K562 (cell line): ENCODE measurements at regions of chr2 and their contacts with region 1.

Region 1: GRCh38 chr2:200963124-200963917 is at the start of gene ORC2:
- DNase-seq: peak; percentile 94 to 96 (median 94)
- ATAC-seq: peak; percentile 93
- H3K4me3 ChIP-seq: peak within 1 kb of the TSS; percentile 63
- H3K27ac ChIP-seq: peak within 1 kb of the TSS; percentile 94
- H3K4me1 ChIP-seq: peaks cover 8 to 10% of the 10 kb centered on the region in 2 experiments; a peak in 4 of 5 replicates
- H3K27me3 ChIP-seq: no peaks in the 10 kb centered on the region
- CTCF ChIP-seq: peak; percentile 73 to 97 (median 77)
- EP300 ChIP-seq: no peak
- POLR2A ChIP-seq: peak; percentile 81
- RAD21 ChIP-seq: peak; percentile 46 to 59
- polyA plus RNA-seq, gene ORC2: 5.6 to 9.7 TPM

Region 2: GRCh38 chr2:200681697-200682096 is 281.6 kb before region 1 on chr2:
- CTCF ChIA-PET with region 1: no interaction called
- POLR2A ChIA-PET with region 1: no interaction called
- in situ Hi-C with region 1: no loop called
- intact Hi-C with region 1: no loop called
- DNase-seq: no peak
- ATAC-seq: no peak
- H3K4me3 ChIP-seq: no peak overlapping the region
- H3K27ac ChIP-seq: no peak overlapping the region
- H3K4me1 ChIP-seq: no peaks in the 10 kb centered on the region
- H3K27me3 ChIP-seq: peaks cover 4 to 11% of the 10 kb centered on the region in 2 experiments; a peak in 2 of 5 replicates
- CTCF ChIP-seq: no peak
- EP300 ChIP-seq: no peak
- POLR2A ChIP-seq: no peak
- RAD21 ChIP-seq: no peak

Region 3: GRCh38 chr2:200975672-200976071 is 12.4 kb after region 1 on chr2:
- CTCF ChIA-PET with region 1: no interaction called
- POLR2A ChIA-PET with region 1: interaction called, 24 read pairs
- in situ Hi-C with region 1: no loop called
- intact Hi-C with region 1: no loop called
- DNase-seq: no peak
- ATAC-seq: no peak
- H3K4me3 ChIP-seq: no peak overlapping the region
- H3K27ac ChIP-seq: no peak overlapping the region
- H3K4me1 ChIP-seq: no peaks in the 10 kb centered on the region
- H3K27me3 ChIP-seq: no peaks in the 10 kb centered on the region
- CTCF ChIP-seq: no peak
- EP300 ChIP-seq: no peak
- POLR2A ChIP-seq: no peak
- RAD21 ChIP-seq: no peak

Region 4: DNA sequence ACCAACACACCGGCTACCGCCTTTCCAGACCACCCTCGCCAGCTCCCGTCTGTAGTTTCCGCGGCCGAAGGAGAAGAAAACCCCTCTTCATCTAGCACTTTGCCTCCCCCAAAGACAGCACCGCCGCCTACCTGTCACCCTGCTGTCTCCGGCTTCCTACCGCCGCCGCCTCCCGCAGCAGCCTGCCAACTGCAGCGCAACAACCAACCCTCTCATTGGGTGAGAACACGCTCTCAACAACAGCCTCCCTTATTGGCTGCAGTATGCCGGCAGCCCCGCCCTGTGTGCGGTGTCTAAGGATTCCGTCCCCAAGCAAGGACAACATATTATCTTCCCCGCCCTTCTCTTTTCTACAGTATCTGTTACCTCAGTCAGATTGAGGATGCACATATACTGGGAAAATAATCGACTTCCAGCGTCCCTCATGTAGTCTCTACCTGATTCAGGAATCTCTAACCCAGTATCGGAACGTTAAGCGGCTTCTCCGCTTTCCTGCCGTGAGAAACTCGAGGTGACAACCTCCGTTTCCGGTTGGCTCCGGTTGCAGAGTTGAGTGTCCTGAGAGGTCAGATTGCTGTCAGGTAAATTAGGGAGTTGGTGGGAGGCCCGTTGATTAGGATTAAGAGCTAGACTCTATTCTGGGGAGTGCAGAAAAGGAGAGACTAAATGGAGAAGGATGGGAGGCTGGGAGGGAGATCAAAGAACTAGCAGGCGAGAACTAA is 108.3 kb after region 1 on chr2 and contains the starts of genes HYCC2 and NDUFB3:
- CTCF ChIA-PET with region 1: interaction called, 9 read pairs
- POLR2A ChIA-PET with region 1: no interaction called
- in situ Hi-C with region 1: no loop called
- intact Hi-C with region 1: loop called (anchors 2 kb)
- DNase-seq: peak; percentile 94 to 98 (median 96)
- ATAC-seq: peak; percentile 92
- H3K4me3 ChIP-seq: peak within 1 kb of the TSS; percentile 83
- H3K27ac ChIP-seq: peak within 1 kb of the TSS; percentile 99
- H3K4me1 ChIP-seq: peaks cover 4 to 5% of the 10 kb centered on the region in 2 experiments; a peak in 3 of 5 replicates
- H3K27me3 ChIP-seq: no peaks in the 10 kb centered on the region
- CTCF ChIP-seq: peak; percentile 38 to 47 (median 42); a peak in 4 of 6 replicates
- EP300 ChIP-seq: 0 out of 2 replicates have a peak, but pooled peaks have one; percentile 17
- POLR2A ChIP-seq: peak; percentile 84
- RAD21 ChIP-seq: 0 out of 4 replicates have a peak, but pooled peaks of 1 of the 2 experiments have one; percentile 2
- polyA plus RNA-seq, gene HYCC2: 7.5 to 9.8 TPM
- polyA plus RNA-seq, gene NDUFB3: 679 to 786 TPM

Region 5: GRCh38 chr2:201158111-201158929 is 195.0 kb after region 1 on chr2:
- CTCF ChIA-PET with region 1: no interaction called
- POLR2A ChIA-PET with region 1: interaction called, 6 read pairs
- in situ Hi-C with region 1: no loop called
- intact Hi-C with region 1: loop called (anchors 5 kb)
- DNase-seq: peak; percentile 42 to 82 (median 60)
- ATAC-seq: peak; percentile 94
- H3K4me3 ChIP-seq: no peak overlapping the region
- H3K27ac ChIP-seq: peak overlapping the region; percentile 66
- H3K4me1 ChIP-seq: peaks cover 7 to 17% of the 10 kb centered on the region in 2 experiments; a peak in 4 of 5 replicates
- H3K27me3 ChIP-seq: no peaks in the 10 kb centered on the region
- CTCF ChIP-seq: peak; percentile 61 to 84 (median 75)
- EP300 ChIP-seq: peak; percentile 74
- POLR2A ChIP-seq: no peak
- RAD21 ChIP-seq: peak; percentile 86 to 90

Region 6: GRCh38 chr2:201176081-201176481 is 212.8 kb after region 1 on chr2:
- CTCF ChIA-PET with region 1: no interaction called
- POLR2A ChIA-PET with region 1: no interaction called
- in situ Hi-C with region 1: no loop called
- intact Hi-C with region 1: loop called (anchors 5 kb)
- DNase-seq: no peak
- ATAC-seq: no peak
- H3K4me3 ChIP-seq: no peak overlapping the region
- H3K27ac ChIP-seq: no peak overlapping the region
- H3K4me1 ChIP-seq: peaks cover 0 to 6% of the 10 kb centered on the region in 2 experiments; a peak in 3 of 5 replicates
- H3K27me3 ChIP-seq: no peaks in the 10 kb centered on the region
- CTCF ChIP-seq: no peak
- EP300 ChIP-seq: no peak
- POLR2A ChIP-seq: no peak
- RAD21 ChIP-seq: no peak